Activated T-helper 2 cell treated with anti-CD3 and anti-CD28 coated beads, Interferon-gamma antibody, Interleukin-2, Interleukin-4, amounts not matched to agents 10 μg/mL and 5 μg/mL and 100 μg/mL, durations not matched to agents 14 hours and 24 hours and 36 hours (primary cell): ENCODE measurements at regions of chr2 and their contacts with region 1.

Region 1: GRCh38 chr2:233053928-233054784 is 6.0 kb upstream of the INPP5D start:
- DNase-seq: peak; percentile 56
- H3K4me3 Mint-ChIP-seq: no peak overlapping the region
- H3K27ac Mint-ChIP-seq: no peak overlapping the region
- H3K4me1 Mint-ChIP-seq: peaks cover 10% of the 10 kb centered on the region
- H3K27me3 Mint-ChIP-seq: peaks cover 16% of the 10 kb centered on the region

Region 2: DNA sequence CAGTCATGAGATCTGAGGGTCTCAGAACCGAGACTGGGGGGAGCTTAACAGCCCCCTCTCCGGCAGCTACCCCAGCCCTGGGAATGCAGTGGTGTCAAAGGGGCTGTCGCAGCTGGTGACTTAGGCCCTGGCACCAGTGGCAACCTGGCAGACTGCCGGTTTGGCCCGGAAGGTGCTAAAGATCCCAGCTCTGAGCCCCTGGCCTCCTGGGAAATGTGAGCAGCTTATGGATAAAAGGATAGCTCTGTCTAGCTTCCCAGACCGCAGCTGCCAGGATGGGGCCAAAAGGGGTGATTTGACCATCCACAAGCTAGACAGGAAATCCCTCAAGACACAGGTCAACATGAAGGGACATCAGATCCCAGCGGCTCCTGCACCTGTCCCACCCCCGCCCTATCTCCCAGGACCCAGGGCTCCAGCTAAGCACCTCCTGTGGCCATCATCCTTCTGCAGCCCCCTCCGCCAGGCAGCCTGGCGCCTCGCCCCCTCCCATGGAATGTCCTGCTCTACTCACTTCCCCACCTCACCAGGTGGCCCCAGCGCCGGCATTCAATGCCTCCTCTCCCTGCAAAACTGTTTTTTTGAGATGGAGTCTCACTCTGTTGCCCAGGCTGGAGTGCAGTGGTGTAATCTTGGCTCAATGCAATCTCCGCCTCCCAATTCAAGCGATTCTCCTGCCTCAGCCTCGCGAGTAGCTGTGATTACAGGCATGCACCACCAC is 453.9 kb before region 1 on chr2:
- intact Hi-C with region 1: loop called (anchors 10 kb)
- DNase-seq: no peak
- H3K4me3 Mint-ChIP-seq: no peak overlapping the region
- H3K27ac Mint-ChIP-seq: no peak overlapping the region
- H3K4me1 Mint-ChIP-seq: no peaks in the 10 kb centered on the region
- H3K27me3 Mint-ChIP-seq: peaks cover 17% of the 10 kb centered on the region

Region 3: GRCh38 chr2:232761301-232761907 is 292.8 kb before region 1 on chr2:
- intact Hi-C with region 1: loop called (anchors 10 kb)
- DNase-seq: peak; percentile 25
- H3K4me3 Mint-ChIP-seq: no peak overlapping the region
- H3K27ac Mint-ChIP-seq: no peak overlapping the region
- H3K4me1 Mint-ChIP-seq: peaks cover 21% of the 10 kb centered on the region
- H3K27me3 Mint-ChIP-seq: no peaks in the 10 kb centered on the region

Region 4: DNA sequence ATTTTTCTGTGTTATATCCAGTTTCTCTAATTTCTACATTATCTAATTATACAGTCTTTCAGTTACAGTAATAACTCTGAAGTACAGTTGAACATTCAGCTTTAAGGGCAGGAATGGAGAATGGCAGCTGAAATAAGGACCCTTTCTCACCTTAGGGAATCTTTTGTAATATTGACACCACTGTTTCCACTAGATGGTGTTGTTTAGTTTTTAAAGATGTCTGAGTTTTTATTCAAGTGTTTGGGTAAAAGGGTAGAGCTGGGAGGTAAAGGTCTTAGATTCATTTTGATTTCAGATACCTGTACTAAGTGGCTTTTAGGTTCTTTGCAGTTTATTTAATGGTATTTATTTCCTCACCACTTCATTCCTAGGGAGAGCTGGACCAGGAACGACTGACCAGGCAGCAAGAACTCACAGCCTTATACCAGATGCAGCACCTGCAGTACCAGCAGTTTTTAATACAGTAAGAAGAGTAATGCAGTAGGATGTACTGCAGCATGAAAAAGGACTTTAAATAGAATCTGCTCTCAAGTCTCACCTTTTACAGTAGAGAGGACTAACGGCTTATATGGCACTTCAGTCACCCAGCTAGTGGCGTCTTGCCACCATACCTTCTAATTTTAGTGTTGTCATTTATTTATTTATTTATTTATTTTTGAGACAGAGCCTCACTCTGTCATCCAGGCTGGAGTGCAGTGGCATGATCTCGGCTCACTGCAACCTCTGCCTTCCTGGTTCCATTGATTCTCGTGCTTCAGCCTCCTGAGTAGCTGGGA is 244.6 kb before region 1 on chr2:
- intact Hi-C with region 1: no loop called
- DNase-seq: no peak
- H3K4me3 Mint-ChIP-seq: no peak overlapping the region
- H3K27ac Mint-ChIP-seq: no peak overlapping the region
- H3K4me1 Mint-ChIP-seq: peaks cover 3% of the 10 kb centered on the region
- H3K27me3 Mint-ChIP-seq: no peaks in the 10 kb centered on the region

Region 5: DNA sequence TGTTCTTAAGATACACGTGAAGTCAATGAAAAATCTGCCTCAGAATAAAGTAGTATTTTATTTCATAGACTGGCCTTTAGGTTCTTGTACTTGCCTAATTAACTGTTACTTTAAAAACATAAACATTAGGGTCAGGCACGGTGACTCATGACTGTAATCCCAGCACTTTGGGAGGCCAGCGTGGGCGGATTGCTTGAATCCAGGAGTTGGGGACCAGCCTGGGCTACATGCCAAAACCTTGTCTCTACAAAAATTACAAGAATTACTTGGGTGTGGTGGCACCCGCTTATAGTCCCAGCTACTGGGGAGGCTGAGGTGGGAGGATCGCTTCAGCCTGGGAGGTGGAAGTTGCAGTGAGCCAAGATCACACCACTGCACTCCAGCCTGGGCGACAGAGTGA is 200.1 kb before region 1 on chr2:
- intact Hi-C with region 1: loop called (anchors 2 kb)
- DNase-seq: no peak
- H3K4me3 Mint-ChIP-seq: no peak overlapping the region
- H3K27ac Mint-ChIP-seq: no peak overlapping the region
- H3K4me1 Mint-ChIP-seq: peaks cover 2% of the 10 kb centered on the region
- H3K27me3 Mint-ChIP-seq: no peaks in the 10 kb centered on the region